ENCODE measurements at regions of chr2 and their contacts with region 1.

Region 1: DNA sequence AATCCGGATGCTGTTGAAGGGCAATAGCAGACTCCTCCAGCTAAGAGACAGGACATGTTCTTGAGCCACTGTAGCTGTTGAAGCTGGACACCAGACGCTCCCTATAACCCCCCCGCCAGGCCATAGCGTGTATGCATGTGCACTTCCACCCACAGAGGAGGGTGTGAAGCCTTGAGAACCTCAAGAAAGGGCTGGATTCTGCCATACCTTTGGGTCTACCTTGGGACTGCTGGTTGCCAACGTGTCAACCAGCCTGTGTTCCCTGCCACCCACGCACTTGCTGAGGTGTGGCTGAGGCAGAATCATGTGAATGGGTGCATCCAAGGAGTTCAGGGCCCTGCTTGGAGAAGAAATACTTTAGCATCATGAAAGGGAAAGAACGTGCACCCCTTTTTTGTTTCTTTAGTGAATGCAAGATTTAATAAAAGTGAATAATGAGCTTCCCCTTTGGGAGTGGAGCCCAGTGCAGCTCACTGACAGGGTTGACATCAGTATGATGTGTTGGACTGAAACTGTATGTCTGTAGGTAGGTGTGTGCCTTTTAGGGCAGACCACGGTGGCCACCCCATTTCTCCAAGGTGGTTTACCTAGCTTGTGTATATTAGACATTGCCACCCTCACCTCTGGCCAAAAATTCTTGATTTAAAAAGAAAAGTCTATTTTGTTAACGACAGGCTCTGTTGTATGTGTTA is 198.3 kb downstream of the MGAT5 start:
- DNase-seq: no peak
- ATAC-seq: no peak
- H3K4me3 Mint-ChIP-seq: no peak overlapping the region
- H3K27ac Mint-ChIP-seq: no peak overlapping the region
- H3K4me1 Mint-ChIP-seq: peaks cover 10% of the 10 kb centered on the region
- H3K27me3 Mint-ChIP-seq: no peaks in the 10 kb centered on the region
- CTCF ChIP-seq: no peak

Region 2: GRCh38 chr2:134207564-134208209 is 244.5 kb before region 1 on chr2:
- CTCF ChIA-PET with region 1: interaction called, 12 read pairs
- POLR2A ChIA-PET with region 1: no interaction called
- DNase-seq: peak; percentile 66
- ATAC-seq: peak; percentile 83
- H3K4me3 Mint-ChIP-seq: no peak overlapping the region
- H3K27ac Mint-ChIP-seq: no peak overlapping the region
- H3K4me1 Mint-ChIP-seq: peaks cover 12% of the 10 kb centered on the region
- H3K27me3 Mint-ChIP-seq: no peaks in the 10 kb centered on the region
- CTCF ChIP-seq: peak; percentile 56

Region 3: DNA sequence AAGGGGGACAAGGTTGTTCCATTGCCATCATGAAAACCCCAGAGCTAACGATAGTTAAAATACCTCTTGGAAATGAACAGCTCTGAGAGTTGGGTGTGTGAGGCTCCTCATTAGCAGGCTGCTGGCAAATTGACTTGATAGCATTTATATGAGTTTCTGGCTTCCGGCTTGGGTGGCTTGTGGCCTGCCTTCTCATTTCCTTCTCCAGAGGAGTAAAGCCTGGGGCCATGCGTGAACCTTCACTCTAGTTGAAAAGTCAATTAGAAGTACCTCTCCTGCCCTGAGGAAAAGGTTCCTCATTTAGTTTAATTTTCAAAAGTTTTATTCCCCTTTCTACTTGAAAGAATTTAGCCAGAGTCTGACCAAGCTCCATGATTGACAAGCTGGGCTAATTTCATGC is 131.3 kb before region 1 on chr2:
- CTCF ChIA-PET with region 1: no interaction called
- POLR2A ChIA-PET with region 1: no interaction called
- DNase-seq: no peak
- ATAC-seq: no peak
- H3K4me3 Mint-ChIP-seq: no peak overlapping the region
- H3K27ac Mint-ChIP-seq: no peak overlapping the region
- H3K4me1 Mint-ChIP-seq: peaks cover 28% of the 10 kb centered on the region
- H3K27me3 Mint-ChIP-seq: no peaks in the 10 kb centered on the region
- CTCF ChIP-seq: no peak

Region 4: GRCh38 chr2:134346141-134346540 is 106.0 kb before region 1 on chr2:
- CTCF ChIA-PET with region 1: no interaction called
- POLR2A ChIA-PET with region 1: no interaction called
- DNase-seq: no peak
- ATAC-seq: no peak
- H3K4me3 Mint-ChIP-seq: no peak overlapping the region
- H3K27ac Mint-ChIP-seq: no peak overlapping the region
- H3K4me1 Mint-ChIP-seq: no peaks in the 10 kb centered on the region
- H3K27me3 Mint-ChIP-seq: no peaks in the 10 kb centered on the region
- CTCF ChIP-seq: no peak

Region 5: DNA sequence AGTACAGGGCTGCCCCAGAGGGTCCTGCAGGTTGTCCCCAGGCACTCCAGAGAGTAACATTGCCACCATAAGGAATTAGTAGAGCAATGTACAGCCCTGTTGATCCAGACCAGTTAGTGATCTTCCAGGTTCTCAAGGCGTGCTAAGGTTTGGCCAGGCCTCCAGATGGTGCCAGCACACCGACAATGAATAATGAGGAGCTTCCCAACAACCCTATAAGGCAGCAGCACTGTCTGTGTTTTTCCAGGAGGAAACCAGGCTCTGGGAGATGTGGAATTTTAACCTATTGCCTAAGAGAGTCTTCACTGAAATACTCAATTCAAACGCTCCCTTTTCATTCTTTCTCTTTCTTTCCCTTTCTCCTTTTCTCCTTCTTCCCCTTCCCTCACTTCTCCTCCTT is 76.3 kb before region 1 on chr2:
- CTCF ChIA-PET with region 1: interaction called, 16 read pairs
- POLR2A ChIA-PET with region 1: no interaction called
- DNase-seq: peak; percentile 13
- ATAC-seq: peak; percentile 69
- H3K4me3 Mint-ChIP-seq: no peak overlapping the region
- H3K27ac Mint-ChIP-seq: no peak overlapping the region
- H3K4me1 Mint-ChIP-seq: no peaks in the 10 kb centered on the region
- H3K27me3 Mint-ChIP-seq: no peaks in the 10 kb centered on the region
- CTCF ChIP-seq: no peak

Region 6: DNA sequence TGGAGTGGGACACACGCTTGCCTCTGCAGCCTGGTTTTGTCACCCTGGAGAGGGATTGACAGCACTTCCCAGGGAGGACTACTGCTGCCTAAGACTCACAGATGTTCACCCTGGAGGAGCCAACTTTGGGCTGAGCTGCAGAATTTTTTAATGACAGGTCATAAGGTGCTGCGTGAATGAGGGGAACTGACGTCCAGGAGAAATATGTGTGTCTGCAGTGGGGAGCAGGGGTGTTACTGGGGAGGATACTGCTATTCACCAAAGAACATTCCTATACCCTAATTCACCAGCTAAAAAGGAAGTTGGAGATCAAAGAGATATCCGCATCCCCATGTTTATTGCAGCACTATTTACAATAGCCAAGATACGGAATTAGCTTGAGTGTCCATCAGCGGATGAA is 53.9 kb before region 1 on chr2:
- CTCF ChIA-PET with region 1: interaction called, 23 read pairs
- POLR2A ChIA-PET with region 1: no interaction called
- DNase-seq: no peak
- ATAC-seq: no peak
- H3K4me3 Mint-ChIP-seq: no peak overlapping the region
- H3K27ac Mint-ChIP-seq: no peak overlapping the region
- H3K4me1 Mint-ChIP-seq: peaks cover 15% of the 10 kb centered on the region
- H3K27me3 Mint-ChIP-seq: no peaks in the 10 kb centered on the region
- CTCF ChIP-seq: no peak

Region 7: GRCh38 chr2:134425724-134426496 is 26.3 kb before region 1 on chr2:
- CTCF ChIA-PET with region 1: interaction called, 36 read pairs
- POLR2A ChIA-PET with region 1: no interaction called
- DNase-seq: no peak
- ATAC-seq: no peak
- H3K4me3 Mint-ChIP-seq: no peak overlapping the region
- H3K27ac Mint-ChIP-seq: no peak overlapping the region
- H3K4me1 Mint-ChIP-seq: peaks cover 2% of the 10 kb centered on the region; the same call in 1 of the 2 replicates
- H3K27me3 Mint-ChIP-seq: peaks cover 23% of the 10 kb centered on the region
- CTCF ChIP-seq: no peak

Region 8: GRCh38 chr2:134466141-134466540 is 14.0 kb after region 1 on chr2:
- CTCF ChIA-PET with region 1: interaction called, 75 read pairs
- POLR2A ChIA-PET with region 1: no interaction called
- DNase-seq: peak; percentile 61
- ATAC-seq: peak; percentile 65
- H3K4me3 Mint-ChIP-seq: no peak overlapping the region
- H3K27ac Mint-ChIP-seq: no peak overlapping the region
- H3K4me1 Mint-ChIP-seq: no peaks in the 10 kb centered on the region; the same call in 1 of the 2 replicates
- H3K27me3 Mint-ChIP-seq: no peaks in the 10 kb centered on the region
- CTCF ChIP-seq: peak; percentile 42; the same call in 1 of the 2 replicates

Region 9: DNA sequence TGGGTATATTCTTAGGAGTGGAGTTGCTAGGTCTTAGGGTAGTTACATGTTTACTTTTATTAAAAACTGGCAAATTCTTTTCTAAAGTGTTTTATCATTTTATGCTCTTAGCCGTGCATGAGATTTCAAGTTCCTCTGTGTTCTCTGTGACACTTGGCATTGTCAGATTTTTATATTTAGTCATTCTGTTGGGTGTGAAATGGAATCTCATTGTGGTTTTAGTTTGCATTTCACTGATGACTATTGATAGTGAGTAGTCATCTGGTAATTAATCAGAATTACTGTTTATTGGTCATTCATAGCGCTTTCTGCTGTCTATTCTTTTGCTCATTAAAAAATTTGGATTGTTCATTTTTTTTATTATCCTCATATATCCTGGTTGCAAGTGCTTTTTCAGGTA is 634.0 kb after region 1 on chr2:
- CTCF ChIA-PET with region 1: no interaction called
- POLR2A ChIA-PET with region 1: no interaction called
- DNase-seq: no peak
- ATAC-seq: no peak
- H3K4me3 Mint-ChIP-seq: no peak overlapping the region
- H3K27ac Mint-ChIP-seq: no peak overlapping the region
- H3K4me1 Mint-ChIP-seq: no peaks in the 10 kb centered on the region
- H3K27me3 Mint-ChIP-seq: no peaks in the 10 kb centered on the region
- CTCF ChIP-seq: no peak

Measured in WTC11 (cell line).